GM12878 (cell line): ENCODE measurements at regions of chr9 and their contacts with region 1.

Region 1: DNA sequence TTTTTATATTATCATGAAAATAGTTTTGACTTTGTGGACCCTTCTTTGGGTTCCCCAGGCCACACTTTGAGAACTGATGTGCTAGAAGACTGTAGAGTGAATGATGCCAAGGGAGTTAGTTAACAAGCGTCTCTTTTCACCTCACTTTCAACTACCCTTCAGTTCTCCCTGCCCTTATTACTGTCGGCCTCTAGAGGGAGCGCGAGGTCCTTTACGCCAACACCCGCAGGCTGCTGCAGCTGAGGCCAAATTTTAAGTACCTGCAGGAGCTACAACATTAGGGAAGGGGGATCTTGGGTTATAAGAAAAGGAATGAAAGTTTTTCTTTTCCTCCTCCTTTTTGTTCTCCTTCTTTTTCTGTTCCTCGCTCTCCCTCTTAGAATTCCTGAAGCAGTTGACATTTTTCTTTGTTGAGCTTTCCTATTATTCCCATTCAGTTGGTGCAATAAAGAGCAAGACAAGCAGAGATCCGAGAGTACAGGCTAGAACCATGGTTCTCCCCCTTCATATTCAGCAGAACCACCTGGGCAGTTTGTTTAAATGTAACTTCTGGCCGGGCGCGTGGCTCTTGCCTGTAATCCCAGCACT is 84.0 kb downstream of the ZFAND5 start:
- DNase-seq: no peak
- ATAC-seq: peak; percentile 92
- H3K4me3 ChIP-seq: no peak overlapping the region
- H3K27ac ChIP-seq: no peak overlapping the region
- H3K4me1 ChIP-seq: no peaks in the 10 kb centered on the region
- H3K27me3 ChIP-seq: no peaks in the 10 kb centered on the region
- CTCF ChIP-seq: peak; percentile 91 to 99 (median 95); a peak in 5 of 6 replicates
- EP300 ChIP-seq: no peak
- POLR2A ChIP-seq: no peak
- RAD21 ChIP-seq: peak; percentile 99

Region 2: DNA sequence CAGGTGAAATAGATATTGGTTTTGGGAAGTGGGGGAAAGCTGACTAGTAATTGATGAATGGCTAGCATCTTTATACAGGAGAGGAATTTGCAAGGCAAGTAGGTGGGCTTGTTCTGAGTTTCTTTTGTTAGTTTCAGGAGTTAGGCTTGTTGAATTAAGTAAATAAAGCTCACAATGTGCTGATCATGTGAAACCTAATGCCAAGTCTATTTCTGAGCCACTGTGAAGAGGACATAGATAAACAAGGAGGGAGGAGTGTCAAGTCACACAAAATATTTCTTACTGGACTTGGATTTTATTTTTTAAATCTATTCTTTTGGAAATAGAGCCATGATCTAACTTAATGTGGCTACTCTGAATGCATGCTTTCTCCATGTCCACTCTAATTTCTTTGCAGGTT is 111.8 kb before region 1 on chr9:
- CTCF ChIA-PET with region 1: no interaction called
- POLR2A ChIA-PET with region 1: no interaction called
- RAD21 ChIA-PET with region 1: no interaction called
- SMC1A ChIA-PET with region 1: no interaction called
- in situ Hi-C with region 1: no loop called
- intact Hi-C with region 1: no loop called
- DNase-seq: no peak
- ATAC-seq: no peak
- H3K4me3 ChIP-seq: no peak overlapping the region
- H3K27ac ChIP-seq: no peak overlapping the region
- H3K4me1 ChIP-seq: no peaks in the 10 kb centered on the region
- H3K27me3 ChIP-seq: no peaks in the 10 kb centered on the region
- CTCF ChIP-seq: no peak
- EP300 ChIP-seq: no peak
- POLR2A ChIP-seq: no peak
- RAD21 ChIP-seq: no peak

Region 3: GRCh38 chr9:72203205-72203803 is 77.7 kb before region 1 on chr9:
- CTCF ChIA-PET with region 1: interaction called, 468 read pairs
- POLR2A ChIA-PET with region 1: interaction called, 5 read pairs
- RAD21 ChIA-PET with region 1: interaction called, 242 read pairs
- SMC1A ChIA-PET with region 1: interaction called, 446 read pairs
- in situ Hi-C with region 1: no loop called
- intact Hi-C with region 1: no loop called
- DNase-seq: no peak
- ATAC-seq: peak; percentile 76
- H3K4me3 ChIP-seq: no peak overlapping the region
- H3K27ac ChIP-seq: no peak overlapping the region
- H3K4me1 ChIP-seq: peaks cover 4% of the 10 kb centered on the region
- H3K27me3 ChIP-seq: no peaks in the 10 kb centered on the region
- CTCF ChIP-seq: peak; percentile 62 to 71 (median 71)
- EP300 ChIP-seq: no peak
- POLR2A ChIP-seq: no peak
- RAD21 ChIP-seq: peak; percentile 51

Region 4: DNA sequence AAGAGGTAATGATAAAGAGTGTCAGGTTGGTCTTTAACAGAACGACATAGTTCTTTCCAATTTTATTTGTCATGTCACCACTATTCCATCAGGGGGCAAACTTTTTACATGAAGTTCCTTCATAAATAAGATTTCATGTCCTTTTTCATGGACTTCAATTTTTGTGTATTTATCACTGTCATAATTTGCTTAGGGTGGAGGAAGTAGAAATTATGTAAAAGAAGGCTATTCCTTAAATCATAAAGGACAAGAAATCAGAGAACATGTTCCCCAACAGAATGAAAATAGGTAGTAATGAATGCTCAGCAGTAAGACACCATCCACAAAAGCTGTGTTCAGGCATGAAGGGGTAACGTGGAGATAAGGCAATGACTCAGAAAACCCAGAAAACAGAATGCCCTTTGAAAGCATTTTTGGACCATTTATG is 11.3 kb after region 1 on chr9:
- CTCF ChIA-PET with region 1: interaction called, 57 read pairs
- POLR2A ChIA-PET with region 1: interaction called, 3 read pairs
- RAD21 ChIA-PET with region 1: interaction called, 43 read pairs
- SMC1A ChIA-PET with region 1: interaction called, 51 read pairs
- in situ Hi-C with region 1: no loop called
- intact Hi-C with region 1: no loop called
- DNase-seq: no peak
- ATAC-seq: peak; percentile 61
- H3K4me3 ChIP-seq: no peak overlapping the region
- H3K27ac ChIP-seq: no peak overlapping the region
- H3K4me1 ChIP-seq: no peaks in the 10 kb centered on the region
- H3K27me3 ChIP-seq: no peaks in the 10 kb centered on the region
- CTCF ChIP-seq: peak; percentile 27 to 63 (median 33); a peak in 4 of 6 replicates
- EP300 ChIP-seq: no peak
- POLR2A ChIP-seq: no peak
- RAD21 ChIP-seq: peak; percentile 65

Region 5: GRCh38 chr9:72526901-72527800 is 246.1 kb after region 1 on chr9:
- CTCF ChIA-PET with region 1: no interaction called
- POLR2A ChIA-PET with region 1: no interaction called
- RAD21 ChIA-PET with region 1: interaction called, 3 read pairs
- SMC1A ChIA-PET with region 1: no interaction called
- in situ Hi-C with region 1: no loop called
- intact Hi-C with region 1: loop called (anchors 5 kb)
- DNase-seq: peak; percentile 77
- ATAC-seq: peak; percentile 90
- H3K4me3 ChIP-seq: peak overlapping the region; percentile 51
- H3K27ac ChIP-seq: peak overlapping the region; percentile 66
- H3K4me1 ChIP-seq: peaks cover 16% of the 10 kb centered on the region
- H3K27me3 ChIP-seq: no peaks in the 10 kb centered on the region
- CTCF ChIP-seq: peak in 1 of 3 experiments; percentile 22; a peak in 1 of 6 replicates
- EP300 ChIP-seq: peak; percentile 3 to 63; a peak in 1 of 4 replicates
- POLR2A ChIP-seq: peak; percentile 76
- RAD21 ChIP-seq: no peak

Region 6: GRCh38 chr9:72599879-72600534 is 319.0 kb after region 1 on chr9:
- CTCF ChIA-PET with region 1: interaction called, 172 read pairs
- POLR2A ChIA-PET with region 1: no interaction called
- RAD21 ChIA-PET with region 1: interaction called, 12 read pairs
- SMC1A ChIA-PET with region 1: interaction called, 97 read pairs
- in situ Hi-C with region 1: no loop called
- intact Hi-C with region 1: no loop called
- DNase-seq: no peak
- ATAC-seq: peak; percentile 27; the same call in 2 of the 3 replicates
- H3K4me3 ChIP-seq: no peak overlapping the region
- H3K27ac ChIP-seq: no peak overlapping the region
- H3K4me1 ChIP-seq: no peaks in the 10 kb centered on the region
- H3K27me3 ChIP-seq: no peaks in the 10 kb centered on the region
- CTCF ChIP-seq: peak in 1 of 3 experiments; percentile 19; a peak in 1 of 6 replicates
- EP300 ChIP-seq: no peak
- POLR2A ChIP-seq: no peak
- RAD21 ChIP-seq: no peak

Region 7: DNA sequence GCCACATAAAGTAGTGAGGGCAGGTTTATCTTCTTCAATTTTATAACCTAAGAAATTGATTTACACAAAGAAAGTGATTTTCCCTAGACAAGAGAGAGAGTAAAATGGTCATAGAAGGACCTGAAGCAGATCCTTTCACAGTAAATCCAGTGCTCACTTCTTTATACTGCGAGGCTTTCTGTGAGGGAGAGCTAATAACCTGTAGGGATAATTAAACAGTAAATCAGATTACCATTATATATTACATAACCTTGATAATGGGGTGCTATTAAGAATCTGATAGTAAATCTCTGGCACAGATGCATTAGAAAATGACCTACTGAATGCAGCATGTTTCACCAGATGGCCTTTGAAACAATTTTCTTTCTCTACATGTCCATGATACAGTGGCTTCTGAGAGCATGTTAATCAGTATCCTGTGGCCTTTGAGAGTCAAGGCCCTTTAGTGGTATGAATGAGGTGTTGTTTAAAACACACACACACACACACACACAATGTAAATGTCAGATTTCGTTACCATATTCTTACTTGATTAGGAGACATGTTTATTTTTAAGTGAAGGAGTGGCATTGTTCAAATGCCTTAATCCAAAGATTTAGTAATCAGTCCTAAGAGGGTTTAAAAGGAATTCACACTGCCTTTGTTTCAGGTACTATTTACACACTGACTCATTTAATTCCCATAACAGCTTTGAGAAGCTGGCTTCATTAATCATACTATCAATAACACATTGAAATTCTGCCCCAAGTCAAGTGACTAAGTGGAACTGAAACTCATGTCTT is 547.1 kb after region 1 on chr9:
- CTCF ChIA-PET with region 1: interaction called, 52 read pairs
- POLR2A ChIA-PET with region 1: no interaction called
- RAD21 ChIA-PET with region 1: interaction called, 21 read pairs
- SMC1A ChIA-PET with region 1: interaction called, 32 read pairs
- in situ Hi-C with region 1: loop called (anchors 5 kb)
- intact Hi-C with region 1: no loop called
- DNase-seq: no peak
- ATAC-seq: no peak
- H3K4me3 ChIP-seq: no peak overlapping the region
- H3K27ac ChIP-seq: no peak overlapping the region
- H3K4me1 ChIP-seq: no peaks in the 10 kb centered on the region
- H3K27me3 ChIP-seq: no peaks in the 10 kb centered on the region
- CTCF ChIP-seq: no peak
- EP300 ChIP-seq: no peak
- POLR2A ChIP-seq: no peak
- RAD21 ChIP-seq: no peak

Region 8: GRCh38 chr9:73081979-73082657 is 801.1 kb after region 1 on chr9:
- CTCF ChIA-PET with region 1: interaction called, 11 read pairs
- POLR2A ChIA-PET with region 1: no interaction called
- RAD21 ChIA-PET with region 1: no interaction called
- SMC1A ChIA-PET with region 1: interaction called, 4 read pairs
- in situ Hi-C with region 1: no loop called
- intact Hi-C with region 1: no loop called
- DNase-seq: no peak
- ATAC-seq: peak; percentile 69
- H3K4me3 ChIP-seq: no peak overlapping the region
- H3K27ac ChIP-seq: no peak overlapping the region
- H3K4me1 ChIP-seq: no peaks in the 10 kb centered on the region
- H3K27me3 ChIP-seq: no peaks in the 10 kb centered on the region
- CTCF ChIP-seq: peak; percentile 64 to 76 (median 67)
- EP300 ChIP-seq: no peak
- POLR2A ChIP-seq: no peak
- RAD21 ChIP-seq: peak; percentile 75